ENCODE measurements at regions of chr7 and their contacts with region 1.

Region 1: GRCh38 chr7:39948956-39949928 is 814 bp upstream of the CDK13 start:
- DNase-seq: peak; percentile 98
- ATAC-seq: peak; percentile 86
- H3K4me3 Mint-ChIP-seq: peak overlapping the region; percentile 98
- H3K27ac Mint-ChIP-seq: peak overlapping the region; percentile 100
- H3K4me1 Mint-ChIP-seq: peaks cover 20% of the 10 kb centered on the region
- H3K27me3 Mint-ChIP-seq: no peaks in the 10 kb centered on the region
- CTCF ChIP-seq: no peak

Region 2: GRCh38 chr7:40194745-40195144 is 245.5 kb after region 1 on chr7:
- CTCF ChIA-PET with region 1: no interaction called
- POLR2A ChIA-PET with region 1: interaction called, 12 read pairs
- DNase-seq: no peak
- ATAC-seq: no peak
- H3K4me3 Mint-ChIP-seq: no peak overlapping the region
- H3K27ac Mint-ChIP-seq: no peak overlapping the region
- H3K4me1 Mint-ChIP-seq: no peaks in the 10 kb centered on the region
- H3K27me3 Mint-ChIP-seq: no peaks in the 10 kb centered on the region
- CTCF ChIP-seq: no peak